Naive thymus-derived CD4-positive, alpha-beta T cell (primary cell): ENCODE measurements at regions of chr19 and their contacts with region 1.

Region 1: DNA sequence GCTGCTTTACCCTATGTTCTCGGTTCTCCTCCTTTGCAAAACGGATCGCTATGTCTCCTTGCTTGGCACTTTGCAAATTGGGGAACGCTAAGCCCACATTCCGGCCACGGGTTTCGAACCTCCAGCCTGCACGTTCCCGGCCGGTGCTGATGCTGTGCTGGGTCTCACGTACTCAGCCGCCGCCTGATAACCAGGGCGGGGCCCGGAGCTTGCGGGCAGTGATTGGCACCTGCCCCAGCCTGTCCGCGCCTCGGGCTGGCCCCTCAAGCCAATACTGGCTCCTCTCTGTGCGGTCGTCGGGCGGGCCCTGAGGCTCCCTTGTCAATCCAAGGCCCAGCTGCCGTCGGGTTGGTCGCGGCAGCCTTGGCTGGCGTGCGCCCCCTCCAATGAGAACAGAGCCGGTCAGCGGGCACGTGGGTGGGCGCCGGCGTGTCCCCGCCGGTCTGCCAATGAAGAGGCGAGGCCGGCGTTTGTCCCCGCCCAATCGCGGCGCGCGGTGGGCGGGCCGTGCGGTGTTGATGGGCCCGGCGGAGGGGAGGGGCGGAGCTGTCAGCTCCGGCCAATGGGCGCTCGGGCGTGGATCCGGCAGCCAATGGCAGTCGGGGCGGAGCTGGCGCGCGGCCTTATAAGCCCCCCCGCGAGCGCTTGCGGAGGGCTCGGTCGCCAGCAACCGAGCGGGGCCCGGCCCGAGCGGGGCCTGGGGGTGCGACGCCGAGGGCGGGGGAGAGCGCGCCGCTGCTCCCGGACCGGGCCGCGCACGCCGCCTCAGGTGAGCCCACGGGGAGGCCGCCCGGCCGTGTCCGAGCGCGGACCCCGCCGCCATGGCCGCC is at the start of gene KDM4B:
- DNase-seq: peak; percentile 97 to 100 (median 99)
- ATAC-seq: peak; percentile 94
- H3K4me3 ChIP-seq: peak within 1 kb of the TSS; percentile 69
- H3K4me3 Mint-ChIP-seq: peak within 1 kb of the TSS; percentile 88 to 97 (median 94)
- H3K27ac ChIP-seq: peak within 1 kb of the TSS; percentile 67
- H3K27ac Mint-ChIP-seq: peak within 1 kb of the TSS; percentile 84 to 96 (median 91)
- H3K4me1 ChIP-seq: peaks cover 26 to 29% of the 10 kb centered on the region in 2 donors
- H3K4me1 Mint-ChIP-seq: peaks cover 26 to 40% (median 32%) of the 10 kb centered on the region in 7 donors
- H3K27me3 ChIP-seq: no peaks in the 10 kb centered on the region
- H3K27me3 Mint-ChIP-seq: no peaks in the 10 kb centered on the region
- total RNA-seq, gene KDM4B: 45.8 to 78.0 (median 65.8) TPM

Region 2: GRCh38 chr19:4624733-4625362 is 343.8 kb before region 1 on chr19:
- CTCF ChIA-PET with region 1: no interaction called
- POLR2A ChIA-PET with region 1: no interaction called
- intact Hi-C with region 1: no loop called
- DNase-seq: no peak
- ATAC-seq: no peak
- H3K4me3 ChIP-seq: no peak overlapping the region
- H3K4me3 Mint-ChIP-seq: no peak overlapping the region
- H3K27ac ChIP-seq: no peak overlapping the region
- H3K27ac Mint-ChIP-seq: no peak overlapping the region
- H3K4me1 ChIP-seq: no peaks in the 10 kb centered on the region
- H3K4me1 Mint-ChIP-seq: peaks cover 0 to 3% (median 0%) of the 10 kb centered on the region in 7 donors
- H3K27me3 ChIP-seq: no peaks in the 10 kb centered on the region
- H3K27me3 Mint-ChIP-seq: peaks cover 0 to 26% (median 11%) of the 10 kb centered on the region in 5 donors

Region 3: GRCh38 chr19:4676955-4677731 is 291.5 kb before region 1 on chr19:
- CTCF ChIA-PET with region 1: no interaction called
- POLR2A ChIA-PET with region 1: no interaction called
- intact Hi-C with region 1: no loop called
- DNase-seq: peak in 3 of 9 donors; percentile 11 to 19 (median 11)
- ATAC-seq: peak; percentile 53
- H3K4me3 ChIP-seq: no peak overlapping the region
- H3K4me3 Mint-ChIP-seq: no peak overlapping the region
- H3K27ac ChIP-seq: no peak overlapping the region
- H3K27ac Mint-ChIP-seq: no peak overlapping the region
- H3K4me1 ChIP-seq: no peaks in the 10 kb centered on the region
- H3K4me1 Mint-ChIP-seq: peaks cover 0 to 2% (median 0%) of the 10 kb centered on the region in 7 donors
- H3K27me3 ChIP-seq: no peaks in the 10 kb centered on the region
- H3K27me3 Mint-ChIP-seq: no peaks in the 10 kb centered on the region

Region 4: GRCh38 chr19:4723367-4724187 is 245.1 kb before region 1 on chr19 and contains the start of gene DPP9:
- CTCF ChIA-PET with region 1: no interaction called
- POLR2A ChIA-PET with region 1: interaction called, 4 read pairs
- intact Hi-C with region 1: loop called in 1 of 2 experiments (anchors 1 kb)
- DNase-seq: peak; percentile 84 to 100 (median 99)
- ATAC-seq: peak; percentile 99
- H3K4me3 ChIP-seq: peak within 1 kb of the TSS; percentile 96
- H3K4me3 Mint-ChIP-seq: peak within 1 kb of the TSS; percentile 83 to 99 (median 95)
- H3K27ac ChIP-seq: peak within 1 kb of the TSS; percentile 87
- H3K27ac Mint-ChIP-seq: peak within 1 kb of the TSS; percentile 93 to 100 (median 98)
- H3K4me1 ChIP-seq: peaks cover 19 to 26% of the 10 kb centered on the region in 2 donors
- H3K4me1 Mint-ChIP-seq: peaks cover 21 to 48% (median 37%) of the 10 kb centered on the region in 7 donors
- H3K27me3 ChIP-seq: no peaks in the 10 kb centered on the region
- H3K27me3 Mint-ChIP-seq: peaks cover 0 to 10% (median 5%) of the 10 kb centered on the region in 5 donors
- total RNA-seq, gene DPP9: 71.2 to 90.7 (median 81.4) TPM

Region 5: GRCh38 chr19:4841366-4841704 is 127.3 kb before region 1 on chr19:
- CTCF ChIA-PET with region 1: no interaction called
- POLR2A ChIA-PET with region 1: no interaction called
- intact Hi-C with region 1: no loop called
- DNase-seq: no peak
- ATAC-seq: peak; percentile 30
- H3K4me3 ChIP-seq: no peak overlapping the region
- H3K4me3 Mint-ChIP-seq: no peak overlapping the region
- H3K27ac ChIP-seq: no peak overlapping the region
- H3K27ac Mint-ChIP-seq: peak overlapping the region in 1 of 9 donors; percentile 34
- H3K4me1 ChIP-seq: no peaks in the 10 kb centered on the region
- H3K4me1 Mint-ChIP-seq: peaks cover 0 to 8% (median 0%) of the 10 kb centered on the region in 7 donors
- H3K27me3 ChIP-seq: no peaks in the 10 kb centered on the region
- H3K27me3 Mint-ChIP-seq: no peaks in the 10 kb centered on the region

Region 6: DNA sequence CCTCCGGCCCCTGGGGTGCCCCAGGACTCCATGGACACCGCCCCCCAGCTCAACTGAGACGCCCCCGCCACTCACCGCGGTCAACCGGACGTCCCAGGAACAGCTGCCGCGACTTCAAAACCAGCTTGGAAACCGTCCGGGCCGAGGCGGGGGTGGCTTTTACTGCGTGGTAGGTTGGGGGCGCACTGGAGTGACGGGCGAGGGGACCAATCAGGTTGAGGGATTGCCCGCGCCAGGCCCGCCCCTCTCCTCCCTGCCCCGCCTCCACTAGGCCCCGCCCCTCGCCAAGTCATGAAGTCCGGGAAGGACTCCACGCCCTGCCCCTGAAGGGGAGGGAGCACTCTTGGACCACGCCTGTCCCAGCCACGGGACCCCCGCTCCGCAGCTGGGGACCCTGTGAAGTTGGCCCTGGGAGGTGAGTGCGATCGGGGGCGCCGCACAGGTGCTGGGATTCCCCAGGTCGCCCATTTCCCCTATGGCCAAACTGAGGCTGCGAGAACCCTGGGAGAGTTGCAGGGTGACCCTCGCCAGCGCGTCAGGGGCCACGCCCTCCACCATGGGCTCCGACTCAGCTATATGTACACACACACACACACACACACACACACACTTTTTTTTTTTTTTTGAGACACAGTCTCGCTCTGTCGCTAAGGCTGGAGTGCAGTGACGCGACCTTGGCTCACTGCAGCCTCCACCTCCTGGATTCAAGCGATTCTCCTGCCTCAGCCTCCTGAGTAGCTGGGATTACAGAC is 101.0 kb before region 1 on chr19 and contains the start of gene PLIN3:
- CTCF ChIA-PET with region 1: interaction called, 5 read pairs
- POLR2A ChIA-PET with region 1: interaction called, 8 read pairs
- intact Hi-C with region 1: loop called (anchors 1 to 2 kb)
- DNase-seq: peak; percentile 61 to 96 (median 79)
- ATAC-seq: peak; percentile 96
- H3K4me3 ChIP-seq: peak within 1 kb of the TSS; percentile 76
- H3K4me3 Mint-ChIP-seq: peak within 1 kb of the TSS; percentile 76 to 88 (median 84)
- H3K27ac ChIP-seq: peak within 1 kb of the TSS; percentile 70
- H3K27ac Mint-ChIP-seq: peak within 1 kb of the TSS; percentile 68 to 86 (median 75)
- H3K4me1 ChIP-seq: peaks cover 4 to 6% of the 10 kb centered on the region in 2 donors
- H3K4me1 Mint-ChIP-seq: peaks cover 5 to 25% (median 10%) of the 10 kb centered on the region in 7 donors
- H3K27me3 ChIP-seq: no peaks in the 10 kb centered on the region
- H3K27me3 Mint-ChIP-seq: no peaks in the 10 kb centered on the region
- total RNA-seq, gene PLIN3: 12.8 to 38.2 (median 32.0) TPM

Region 7: GRCh38 chr19:4916292-4917082 is 52.2 kb before region 1 on chr19:
- CTCF ChIA-PET with region 1: interaction called, 6 read pairs
- POLR2A ChIA-PET with region 1: interaction called, 63 read pairs
- intact Hi-C with region 1: loop called (anchors 1 kb)
- DNase-seq: peak in 8 of 9 donors; percentile 34 to 66 (median 60)
- ATAC-seq: peak; percentile 47
- H3K4me3 ChIP-seq: peak overlapping the region; percentile 80
- H3K4me3 Mint-ChIP-seq: peak overlapping the region; percentile 96 to 100 (median 99)
- H3K27ac ChIP-seq: peak overlapping the region; percentile 93
- H3K27ac Mint-ChIP-seq: peak overlapping the region; percentile 97 to 100 (median 99)
- H3K4me1 ChIP-seq: peaks cover 29 to 34% of the 10 kb centered on the region in 2 donors
- H3K4me1 Mint-ChIP-seq: peaks cover 26 to 59% (median 39%) of the 10 kb centered on the region in 7 donors
- H3K27me3 ChIP-seq: no peaks in the 10 kb centered on the region
- H3K27me3 Mint-ChIP-seq: no peaks in the 10 kb centered on the region

Region 8: GRCh38 chr19:5622463-5623396 is 654.1 kb after region 1 on chr19 and contains the starts of genes SAFB and SAFB2:
- CTCF ChIA-PET with region 1: no interaction called
- POLR2A ChIA-PET with region 1: no interaction called
- intact Hi-C with region 1: loop called in 1 of 2 experiments (anchors 1 kb)
- DNase-seq: peak; percentile 96 to 100 (median 100)
- ATAC-seq: peak; percentile 91
- H3K4me3 ChIP-seq: peak within 1 kb of the TSS; percentile 91
- H3K4me3 Mint-ChIP-seq: peak within 1 kb of the TSS; percentile 97 to 100 (median 100)
- H3K27ac ChIP-seq: peak within 1 kb of the TSS; percentile 97
- H3K27ac Mint-ChIP-seq: peak within 1 kb of the TSS; percentile 99 to 100 (median 100)
- H3K4me1 ChIP-seq: peaks cover 54 to 66% of the 10 kb centered on the region in 2 donors
- H3K4me1 Mint-ChIP-seq: peaks cover 52 to 79% (median 70%) of the 10 kb centered on the region in 7 donors
- H3K27me3 ChIP-seq: no peaks in the 10 kb centered on the region
- H3K27me3 Mint-ChIP-seq: peaks cover 0 to 5% (median 0%) of the 10 kb centered on the region in 5 donors
- total RNA-seq, gene SAFB: 141 to 203 (median 174) TPM
- total RNA-seq, gene SAFB2: 112 to 250 (median 243) TPM